IMR-90 (cell line): ENCODE measurements at regions of chr9 and their contacts with region 1.

Region 1: DNA sequence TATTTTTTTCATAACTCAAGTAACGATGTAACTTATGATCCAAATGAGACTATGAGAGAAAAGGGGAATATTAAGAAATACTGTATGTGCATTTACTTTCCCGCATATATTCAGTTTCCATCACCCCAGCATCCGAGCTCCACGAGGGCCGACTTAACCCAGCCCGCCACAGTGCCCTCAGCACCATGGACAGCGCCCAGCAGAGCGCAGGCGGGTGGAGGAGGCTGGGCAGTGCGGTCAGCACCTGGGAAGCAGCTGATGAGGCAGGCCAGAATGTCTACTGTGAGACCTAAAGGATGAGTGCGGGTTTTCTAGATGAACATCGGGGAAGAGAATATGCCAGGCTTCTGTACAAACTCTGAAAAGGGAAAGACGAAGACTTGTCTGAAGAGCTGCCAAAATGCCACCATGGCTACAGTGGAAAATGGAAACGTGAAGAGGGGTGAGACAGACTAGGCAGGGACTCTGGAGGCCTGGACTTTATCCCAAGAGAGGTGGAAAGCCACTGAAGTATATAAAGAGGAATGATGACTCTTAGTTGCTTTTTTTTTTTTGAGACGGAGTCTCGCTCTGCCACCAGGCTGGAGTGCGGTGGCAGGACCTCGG is 34.5 kb upstream of the MED27 start:
- DNase-seq: peak; percentile 60
- ATAC-seq: peak; percentile 99
- H3K4me3 ChIP-seq: no peak overlapping the region
- H3K27ac ChIP-seq: no peak overlapping the region
- H3K4me1 ChIP-seq: no peaks in the 10 kb centered on the region
- H3K27me3 ChIP-seq: peaks cover 24% of the 10 kb centered on the region
- CTCF ChIP-seq: no peak
- POLR2A ChIP-seq: no peak
- RAD21 ChIP-seq: peak; percentile 33

Region 2: GRCh38 chr9:131773911-131774379 is 340.3 kb before region 1 on chr9:
- CTCF ChIA-PET with region 1: no interaction called
- POLR2A ChIA-PET with region 1: no interaction called
- dilution Hi-C with region 1: no loop called
- in situ Hi-C with region 1: no loop called
- intact Hi-C with region 1: loop called (anchors 10 kb)
- DNase-seq: peak; percentile 65
- ATAC-seq: peak; percentile 94
- H3K4me3 ChIP-seq: no peak overlapping the region
- H3K27ac ChIP-seq: no peak overlapping the region
- H3K4me1 ChIP-seq: no peaks in the 10 kb centered on the region
- H3K27me3 ChIP-seq: peaks cover 33% of the 10 kb centered on the region
- CTCF ChIP-seq: no peak
- POLR2A ChIP-seq: no peak
- RAD21 ChIP-seq: 0 out of 2 replicates have a peak, but pooled peaks have one; percentile 3

Region 3: GRCh38 chr9:132141344-132141947 is 27.2 kb after region 1 on chr9:
- CTCF ChIA-PET with region 1: no interaction called
- POLR2A ChIA-PET with region 1: no interaction called
- dilution Hi-C with region 1: no loop called
- in situ Hi-C with region 1: no loop called
- intact Hi-C with region 1: no loop called
- DNase-seq: no peak
- ATAC-seq: peak; percentile 66
- H3K4me3 ChIP-seq: peak overlapping the region; percentile 19
- H3K27ac ChIP-seq: no peak overlapping the region
- H3K4me1 ChIP-seq: 0 out of 2 replicates have a peak, but pooled peaks cover 5% of the 10 kb centered on the region
- H3K27me3 ChIP-seq: peaks cover 68% of the 10 kb centered on the region
- CTCF ChIP-seq: no peak
- POLR2A ChIP-seq: no peak
- RAD21 ChIP-seq: no peak

Region 4: GRCh38 chr9:132293145-132293721 is 179.0 kb after region 1 on chr9:
- CTCF ChIA-PET with region 1: no interaction called
- POLR2A ChIA-PET with region 1: no interaction called
- dilution Hi-C with region 1: no loop called
- in situ Hi-C with region 1: no loop called
- intact Hi-C with region 1: no loop called
- DNase-seq: no peak
- ATAC-seq: no peak
- H3K4me3 ChIP-seq: no peak overlapping the region
- H3K27ac ChIP-seq: no peak overlapping the region
- H3K4me1 ChIP-seq: peaks cover 8% of the 10 kb centered on the region
- H3K27me3 ChIP-seq: no peaks in the 10 kb centered on the region
- CTCF ChIP-seq: no peak
- POLR2A ChIP-seq: no peak
- RAD21 ChIP-seq: no peak